ENCODE measurements at regions of chr19 and their contacts with region 1.

Region 1: GRCh38 chr19:2171349-2172145 is 7.8 kb downstream of the DOT1L start:
- DNase-seq: peak; percentile 48 to 61 (median 61)
- H3K4me3 ChIP-seq: no peak overlapping the region
- H3K27ac ChIP-seq: no peak overlapping the region
- H3K4me1 ChIP-seq: peaks cover 8 to 51% (median 47%) of the 10 kb centered on the region in 4 experiments
- H3K27me3 ChIP-seq: no peaks in the 10 kb centered on the region

Region 2: DNA sequence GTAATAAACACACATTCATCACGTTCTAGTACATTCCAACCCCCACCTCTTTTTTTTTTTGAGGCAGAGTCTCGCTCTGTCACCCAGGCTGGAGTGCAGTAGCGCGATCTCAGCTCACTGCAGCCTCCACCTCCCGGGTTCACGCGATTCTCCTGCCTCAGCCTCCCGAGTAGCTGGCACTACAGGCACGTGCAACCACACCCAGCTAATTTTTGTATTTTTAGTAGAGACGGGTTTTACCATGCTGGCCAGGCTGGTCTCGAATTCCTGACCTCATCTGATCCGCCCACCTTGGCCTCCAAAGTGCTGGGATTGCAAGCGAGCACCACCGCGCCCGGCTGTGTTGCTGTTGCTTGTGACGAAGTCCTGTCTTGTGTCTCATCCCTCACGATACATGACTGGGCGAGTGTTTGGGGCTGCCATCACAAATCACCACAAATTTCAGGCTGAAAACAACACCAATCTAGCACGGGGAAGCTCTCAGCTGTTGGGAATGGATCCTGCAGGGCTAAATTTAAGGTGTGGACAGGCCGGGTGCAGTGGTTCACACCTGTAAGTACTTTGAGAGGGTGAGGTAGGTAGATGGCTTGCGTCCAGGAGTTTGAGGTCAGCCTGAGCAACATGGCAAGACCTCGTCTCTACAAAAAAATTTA is 91.1 kb before region 1 on chr19:
- CTCF ChIA-PET with region 1: no interaction called
- POLR2A ChIA-PET with region 1: no interaction called
- DNase-seq: no peak
- H3K4me3 ChIP-seq: no peak overlapping the region
- H3K27ac ChIP-seq: no peak overlapping the region
- H3K4me1 ChIP-seq: peaks cover 0 to 45% (median 42%) of the 10 kb centered on the region in 4 experiments
- H3K27me3 ChIP-seq: no peaks in the 10 kb centered on the region

Region 3: GRCh38 chr19:2186071-2186846 is 14.7 kb after region 1 on chr19:
- CTCF ChIA-PET with region 1: interaction called, 12 read pairs
- POLR2A ChIA-PET with region 1: interaction called, 4 read pairs
- DNase-seq: no peak
- H3K4me3 ChIP-seq: no peak overlapping the region
- H3K27ac ChIP-seq: no peak overlapping the region
- H3K4me1 ChIP-seq: peaks cover 0 to 14% (median 12%) of the 10 kb centered on the region in 4 experiments
- H3K27me3 ChIP-seq: no peaks in the 10 kb centered on the region

Region 4: GRCh38 chr19:2207991-2208860 is 36.7 kb after region 1 on chr19:
- CTCF ChIA-PET with region 1: no interaction called
- POLR2A ChIA-PET with region 1: no interaction called
- DNase-seq: peak in 2 of 3 donors; percentile 14 to 25
- H3K4me3 ChIP-seq: no peak overlapping the region
- H3K27ac ChIP-seq: no peak overlapping the region
- H3K4me1 ChIP-seq: no peaks in the 10 kb centered on the region
- H3K27me3 ChIP-seq: no peaks in the 10 kb centered on the region

Region 5: GRCh38 chr19:2294611-2295335 is 123.2 kb after region 1 on chr19:
- CTCF ChIA-PET with region 1: no interaction called
- POLR2A ChIA-PET with region 1: no interaction called
- DNase-seq: no peak
- H3K4me3 ChIP-seq: no peak overlapping the region
- H3K27ac ChIP-seq: no peak overlapping the region
- H3K4me1 ChIP-seq: peaks cover 0 to 44% (median 38%) of the 10 kb centered on the region in 4 experiments
- H3K27me3 ChIP-seq: no peaks in the 10 kb centered on the region

Measured in common myeloid progenitor, CD34-positive (primary cell).